Lower leg skin (tissue), 4 donors: ENCODE measurements at regions of chr3 and their contacts with region 1.

Region 1: GRCh38 chr3:48439820-48440589 is at the starts of genes CCDC51 and TMA7:
- DNase-seq: peak; percentile 98 to 100
- H3K4me3 ChIP-seq: peak within 1 kb of the TSS; percentile 60
- CTCF ChIP-seq: no peak
- POLR2A ChIP-seq: peak in 1 of 2 donors; percentile 92
- total RNA-seq, gene CCDC51: 6.7 to 17.1 (median 11.6) TPM
- total RNA-seq, gene TMA7: 173 to 271 (median 250) TPM

Region 2: GRCh38 chr3:48273594-48274211 is 166.3 kb before region 1 on chr3:
- intact Hi-C with region 1: loop called (anchors 2 kb)
- DNase-seq: peak; percentile 42 to 85
- H3K4me3 ChIP-seq: no peak overlapping the region
- CTCF ChIP-seq: peak in 1 of 3 donors; percentile 78
- POLR2A ChIP-seq: no peak

Region 3: GRCh38 chr3:48400824-48401433 is 39.1 kb before region 1 on chr3:
- intact Hi-C with region 1: loop called (anchors 2 kb)
- DNase-seq: peak; percentile 59 to 85
- H3K4me3 ChIP-seq: no peak overlapping the region
- CTCF ChIP-seq: no peak
- POLR2A ChIP-seq: no peak

Region 4: DNA sequence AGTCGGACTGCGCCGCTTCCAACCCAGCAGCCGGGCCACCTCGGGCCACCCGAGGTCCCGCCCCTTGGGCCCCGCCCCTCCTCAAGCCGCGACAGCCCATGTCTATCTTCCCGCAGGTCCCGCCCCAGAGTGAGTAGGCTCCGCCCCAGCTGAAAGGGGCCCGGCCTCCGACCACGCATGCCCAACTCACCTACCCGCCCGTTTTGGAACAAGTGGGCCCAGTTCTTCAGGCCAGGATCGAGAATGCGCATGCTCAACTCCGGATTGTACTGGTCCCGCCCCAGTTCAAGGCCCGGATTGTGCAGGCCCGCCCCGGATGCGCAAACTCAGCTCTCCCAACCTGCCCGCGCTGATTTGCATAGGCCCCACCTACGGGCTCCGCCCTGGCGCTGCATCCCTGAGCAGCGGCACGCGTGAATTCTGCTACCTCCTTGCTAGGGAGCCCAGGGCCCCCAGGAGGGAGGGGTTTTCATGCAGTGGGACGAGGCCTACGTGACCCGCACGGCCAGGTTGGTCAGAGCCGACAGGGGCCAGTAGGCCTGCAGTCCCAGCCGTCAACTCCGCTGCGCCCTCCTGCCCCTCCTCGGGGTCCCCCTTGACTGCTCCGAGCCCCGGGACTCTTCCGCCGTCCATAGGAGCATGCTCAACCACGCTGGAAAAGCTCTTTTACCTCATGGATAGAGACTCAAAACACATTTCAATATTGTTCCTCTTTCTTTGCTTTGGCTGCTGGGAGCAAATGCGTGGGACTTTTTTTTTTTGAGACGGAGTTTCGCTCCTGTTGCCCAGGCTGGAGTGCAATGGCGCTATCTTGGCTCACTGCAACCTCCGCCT is 117.0 kb after region 1 on chr3 and contains the start of gene PFKFB4:
- intact Hi-C with region 1: loop called (anchors 10 kb)
- DNase-seq: peak; percentile 99 to 100
- H3K4me3 ChIP-seq: peak within 1 kb of the TSS; percentile 34
- CTCF ChIP-seq: no peak
- POLR2A ChIP-seq: no peak
- total RNA-seq, gene PFKFB4: 3.7 to 8.8 (median 6.4) TPM